ENCODE measurements at regions of chr3 and their contacts with region 1.

Region 1: DNA sequence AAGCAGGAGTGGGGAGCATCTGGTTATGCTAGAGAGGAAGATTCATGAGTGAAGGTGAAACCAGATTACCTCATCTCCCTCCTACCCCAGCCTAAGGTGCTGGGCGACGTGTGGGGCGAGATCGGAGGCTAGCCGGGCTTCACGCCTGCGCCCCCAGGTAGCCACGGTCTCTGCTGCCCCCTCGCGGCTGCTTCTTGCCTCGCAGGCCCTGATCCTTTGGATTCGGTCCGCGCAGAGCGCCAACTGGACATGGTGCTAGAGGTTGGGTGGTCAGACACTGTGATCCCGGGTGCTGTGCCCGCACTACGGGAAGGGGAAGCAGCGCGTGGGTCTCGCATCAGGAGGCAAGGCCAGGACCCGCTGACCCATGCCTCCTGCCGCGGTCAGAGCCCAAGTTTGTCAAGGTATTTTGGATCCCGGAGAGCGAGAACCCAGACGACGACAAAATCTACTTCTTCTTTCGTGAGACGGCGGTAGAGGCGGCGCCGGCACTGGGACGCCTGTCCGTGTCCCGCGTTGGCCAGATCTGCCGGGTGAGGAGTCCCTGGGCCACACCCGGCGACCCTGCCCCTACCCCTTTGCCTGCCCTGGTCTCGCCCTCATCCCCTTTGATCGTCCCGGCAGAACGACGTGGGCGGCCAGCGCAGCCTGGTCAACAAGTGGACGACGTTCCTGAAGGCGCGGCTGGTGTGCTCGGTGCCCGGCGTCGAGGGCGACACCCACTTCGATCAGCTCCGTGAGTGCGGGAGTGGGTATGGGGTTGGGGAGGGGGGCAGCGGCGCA is 4.2 kb downstream of the SEMA3B start:
- DNase-seq: peak; percentile 94
- H3K4me3 Mint-ChIP-seq: peak overlapping the region; percentile 38
- H3K27ac Mint-ChIP-seq: no peak overlapping the region
- H3K4me1 Mint-ChIP-seq: peaks cover 32% of the 10 kb centered on the region
- H3K27me3 Mint-ChIP-seq: peaks cover 27% of the 10 kb centered on the region

Region 2: GRCh38 chr3:50192689-50193141 is 80.4 kb before region 1 on chr3:
- CTCF ChIA-PET with region 1: interaction called, 45 read pairs
- POLR2A ChIA-PET with region 1: no interaction called
- intact Hi-C with region 1: loop called (anchors 1 kb)
- DNase-seq: peak; percentile 89
- H3K4me3 Mint-ChIP-seq: no peak overlapping the region
- H3K27ac Mint-ChIP-seq: no peak overlapping the region
- H3K4me1 Mint-ChIP-seq: peaks cover 10% of the 10 kb centered on the region
- H3K27me3 Mint-ChIP-seq: peaks cover 11% of the 10 kb centered on the region

Region 3: DNA sequence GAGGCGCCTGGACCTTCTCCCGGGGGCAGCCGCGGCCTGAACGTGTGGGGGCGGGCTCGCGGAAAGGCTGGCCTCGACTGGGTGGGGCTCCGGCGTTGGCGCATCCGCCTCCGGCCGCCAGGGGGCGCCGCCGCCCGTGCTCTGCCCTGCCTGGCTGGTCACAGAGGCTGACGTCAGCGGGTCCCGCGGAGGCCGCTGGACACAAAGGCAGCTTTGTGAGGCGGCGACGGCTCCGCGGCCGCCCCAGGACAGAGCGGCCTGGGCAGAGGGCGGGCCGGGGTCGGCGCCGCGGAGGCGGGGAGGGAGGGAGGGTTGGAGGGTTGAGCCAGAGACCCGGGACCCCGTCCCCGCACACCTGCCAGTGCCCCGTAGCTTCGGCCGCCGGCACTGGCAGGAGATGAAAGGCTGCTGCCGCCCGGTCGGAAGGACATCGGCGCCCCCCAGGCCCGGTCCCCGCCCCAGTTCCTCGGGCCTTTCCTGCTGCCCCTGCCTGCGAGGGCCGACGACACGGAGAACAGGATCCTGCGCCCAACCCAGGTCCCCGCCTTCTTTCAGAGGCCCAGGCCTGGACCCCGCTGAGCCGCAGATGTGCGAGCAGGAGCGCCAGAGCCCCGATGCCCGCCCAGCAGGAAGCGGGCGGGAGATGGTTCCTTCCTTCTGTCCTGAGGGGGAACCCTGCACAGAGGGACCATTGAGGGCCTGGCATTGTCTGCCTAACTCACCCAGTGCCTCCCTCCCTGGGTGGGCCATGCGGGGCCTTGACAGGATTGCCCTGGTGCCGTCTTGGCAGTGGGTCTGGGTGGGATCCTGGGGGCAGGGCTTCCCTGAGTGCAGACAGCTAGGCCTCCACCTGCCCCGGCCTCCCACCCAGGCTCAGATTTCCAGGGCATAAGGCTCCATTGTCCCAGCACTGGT is 12.8 kb before region 1 on chr3:
- CTCF ChIA-PET with region 1: interaction called, 5 read pairs
- POLR2A ChIA-PET with region 1: no interaction called
- intact Hi-C with region 1: loop called (anchors 1 kb)
- DNase-seq: peak; percentile 92
- H3K4me3 Mint-ChIP-seq: peak overlapping the region; percentile 59
- H3K27ac Mint-ChIP-seq: peak overlapping the region; percentile 69
- H3K4me1 Mint-ChIP-seq: peaks cover 6% of the 10 kb centered on the region
- H3K27me3 Mint-ChIP-seq: no peaks in the 10 kb centered on the region

Region 4: GRCh38 chr3:50298836-50299637 is 25.9 kb after region 1 on chr3 and contains the starts of genes HYAL3 and NAA80:
- CTCF ChIA-PET with region 1: interaction called, 5 read pairs
- POLR2A ChIA-PET with region 1: no interaction called
- intact Hi-C with region 1: loop called (anchors 2 kb)
- DNase-seq: peak; percentile 100
- H3K4me3 Mint-ChIP-seq: peak within 1 kb of the TSS; percentile 97
- H3K27ac Mint-ChIP-seq: peak within 1 kb of the TSS; percentile 95
- H3K4me1 Mint-ChIP-seq: peaks cover 24% of the 10 kb centered on the region
- H3K27me3 Mint-ChIP-seq: no peaks in the 10 kb centered on the region
- total RNA-seq, gene HYAL3: 2.5 to 4.0 TPM
- total RNA-seq, gene NAA80: 18.8 to 19.6 TPM